ENCODE measurements at regions of chr9 and their contacts with region 1.

Region 1: GRCh38 chr9:111631071-111631971 is at the start of gene DNAJC25:
- DNase-seq: peak; percentile 99
- H3K4me3 ChIP-seq: peak within 1 kb of the TSS; percentile 67 to 92 (median 89)
- H3K27ac ChIP-seq: peak within 1 kb of the TSS; percentile 61 to 90
- H3K4me1 ChIP-seq: peaks cover 12 to 26% (median 21%) of the 10 kb centered on the region in 4 experiments
- H3K27me3 ChIP-seq: no peaks in the 10 kb centered on the region

Region 2: DNA sequence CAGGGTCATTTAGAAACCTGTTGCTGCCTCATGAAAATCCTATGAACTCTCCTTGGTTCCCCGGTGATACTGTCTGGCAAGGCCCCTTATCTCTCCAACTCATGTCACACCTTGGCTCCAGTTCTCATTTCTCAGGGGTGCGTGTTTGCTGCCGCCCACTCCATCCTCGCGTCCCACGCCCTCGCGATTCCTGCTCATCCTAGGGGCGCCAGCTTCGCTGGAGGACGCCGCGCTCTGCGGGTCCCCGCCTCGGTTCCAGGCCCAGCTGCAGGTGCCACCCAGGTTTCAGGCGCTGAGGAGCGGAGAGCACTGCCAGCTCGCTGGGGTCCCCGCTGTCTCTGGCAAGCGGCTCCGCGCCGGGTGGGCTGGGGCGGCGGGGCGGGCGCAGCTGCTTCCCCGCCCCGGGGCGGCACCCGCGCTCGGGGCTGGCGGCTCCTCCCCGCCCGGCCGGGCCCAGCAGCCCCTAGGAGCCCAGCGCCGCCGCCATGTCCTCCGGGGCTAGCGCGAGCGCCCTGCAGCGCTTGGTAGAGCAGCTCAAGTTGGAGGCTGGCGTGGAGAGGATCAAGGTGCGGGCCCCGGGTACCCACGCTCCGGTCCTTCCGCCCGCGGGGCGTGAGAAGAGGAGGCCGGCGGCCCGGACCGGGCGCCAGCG is 30.0 kb after region 1 on chr9 and contains the start of gene GNG10:
- CTCF ChIA-PET with region 1: no interaction called
- POLR2A ChIA-PET with region 1: interaction called, 10 read pairs
- DNase-seq: peak; percentile 54 to 81 (median 65)
- H3K4me3 ChIP-seq: peak within 1 kb of the TSS; percentile 69 to 94 (median 85)
- H3K27ac ChIP-seq: peak within 1 kb of the TSS in 1 of 2 experiments; percentile 68
- H3K4me1 ChIP-seq: peaks cover 10 to 21% (median 20%) of the 10 kb centered on the region in 4 experiments
- H3K27me3 ChIP-seq: no peaks in the 10 kb centered on the region

Measured in common myeloid progenitor, CD34-positive (primary cell).